Left cardiac atrium (tissue), 4 donors: ENCODE measurements at regions of chr1 and their contacts with region 1.

Region 1: GRCh38 chr1:220776720-220777326 is 9.9 kb upstream of the MTARC1 start:
- DNase-seq: peak; percentile 87
- ATAC-seq: peak; percentile 95 to 97

Region 2: GRCh38 chr1:220294846-220295301 is 481.9 kb before region 1 on chr1:
- intact Hi-C with region 1: loop called in 1 of 2 experiments (anchors 10 kb)
- DNase-seq: no peak
- ATAC-seq: no peak

Region 3: DNA sequence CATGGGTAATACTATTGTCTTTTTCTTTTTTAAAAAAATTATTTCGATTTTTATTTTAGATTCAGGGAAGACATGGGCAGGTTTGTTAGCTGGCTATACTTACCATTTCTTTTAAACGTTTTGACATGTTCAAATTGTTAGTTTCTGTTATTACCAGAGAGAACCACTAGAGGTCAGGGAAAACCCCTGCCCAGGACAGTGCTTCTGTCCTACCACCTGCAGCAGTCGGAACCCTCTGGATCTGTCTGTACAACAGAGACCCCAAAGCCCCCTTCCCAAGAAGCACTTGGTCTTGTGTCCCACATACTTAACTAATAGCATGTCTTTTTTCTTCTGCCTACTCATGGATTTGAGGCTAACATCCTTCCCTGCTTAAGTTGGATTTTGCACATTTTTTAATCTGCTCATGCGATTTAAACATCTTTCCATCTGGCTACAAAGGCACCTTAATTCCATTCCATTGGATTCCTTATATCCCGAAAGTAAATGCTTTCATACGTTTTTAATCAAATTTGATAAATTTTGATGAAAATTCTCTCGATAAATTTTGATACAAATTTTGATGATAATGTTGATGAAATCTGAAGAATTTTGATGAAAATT is 96.6 kb before region 1 on chr1:
- intact Hi-C with region 1: loop called (anchors 2 to 5 kb)
- DNase-seq: no peak
- ATAC-seq: peak; percentile 82 to 83